Motor neuron (in vitro differentiated cells): ENCODE measurements at regions of chr6 and their contacts with region 1.

Region 1: DNA sequence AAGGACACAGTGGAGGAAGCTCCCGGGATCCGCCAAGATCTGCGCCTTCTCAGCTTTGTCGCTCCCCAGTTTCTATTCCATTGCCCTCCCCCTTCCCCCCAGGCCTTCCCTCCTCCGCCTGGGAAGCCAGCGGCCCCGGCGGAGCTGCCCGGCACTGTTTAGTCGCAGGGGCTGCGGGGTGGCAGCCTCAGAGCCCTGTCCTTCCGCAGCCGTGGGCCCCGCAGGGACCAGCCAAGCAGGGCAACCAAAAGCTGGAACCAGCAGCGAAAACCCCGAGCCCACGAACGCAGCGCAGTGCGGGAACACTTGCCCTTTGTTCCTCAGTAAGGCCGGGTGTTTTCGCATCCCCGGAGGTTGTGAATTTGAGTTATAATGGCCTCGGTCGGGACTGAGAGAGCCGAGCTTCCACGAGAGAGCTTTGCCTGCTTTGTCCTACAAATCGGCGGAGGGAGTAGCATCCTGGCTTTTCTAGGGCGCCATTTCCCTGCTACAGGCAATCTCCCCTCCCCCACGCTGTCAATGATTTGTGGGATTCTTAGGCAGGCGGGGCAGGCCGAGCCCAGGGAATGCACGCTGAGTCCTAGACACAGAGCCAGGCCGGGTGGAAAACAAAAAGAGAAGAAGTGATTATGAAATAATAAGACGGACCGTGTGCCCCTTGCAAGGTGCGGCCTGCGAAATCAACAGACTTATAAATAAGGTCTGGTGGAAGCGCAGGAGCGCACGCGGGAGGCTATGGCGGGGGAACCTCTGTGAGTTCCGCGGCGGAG is 4.0 kb upstream of the TUBB2B start:
- ATAC-seq: peak; percentile 11 to 60 (median 20)
- H3K4me3 ChIP-seq: peak overlapping the region; percentile 85 to 93 (median 91)
- H3K27ac ChIP-seq: peak overlapping the region; percentile 98 to 100
- H3K4me1 ChIP-seq: peaks cover 17 to 19% of the 10 kb centered on the region in 2 donors

Region 2: GRCh38 chr6:3139090-3139903 is 92.1 kb before region 1 on chr6:
- in situ Hi-C with region 1: loop called in 1 of 9 experiments (anchors 25 kb)
- ATAC-seq: peak; percentile 4 to 93 (median 55)
- H3K4me3 ChIP-seq: no peak overlapping the region
- H3K27ac ChIP-seq: no peak overlapping the region
- H3K4me1 ChIP-seq: peaks cover 0 to 11% of the 10 kb centered on the region in 2 donors